ENCODE measurements at regions of chr10 and their contacts with region 1.

Region 1: GRCh38 chr10:77391605-77392235 is 245.9 kb downstream of the KCNMA1 start:
- DNase-seq: peak; percentile 53 to 74
- H3K4me3 ChIP-seq: no peak overlapping the region
- H3K27ac ChIP-seq: no peak overlapping the region
- H3K4me1 ChIP-seq: peaks cover 40% of the 10 kb centered on the region
- H3K27me3 ChIP-seq: no peaks in the 10 kb centered on the region
- CTCF ChIP-seq: peak; percentile 87

Region 2: DNA sequence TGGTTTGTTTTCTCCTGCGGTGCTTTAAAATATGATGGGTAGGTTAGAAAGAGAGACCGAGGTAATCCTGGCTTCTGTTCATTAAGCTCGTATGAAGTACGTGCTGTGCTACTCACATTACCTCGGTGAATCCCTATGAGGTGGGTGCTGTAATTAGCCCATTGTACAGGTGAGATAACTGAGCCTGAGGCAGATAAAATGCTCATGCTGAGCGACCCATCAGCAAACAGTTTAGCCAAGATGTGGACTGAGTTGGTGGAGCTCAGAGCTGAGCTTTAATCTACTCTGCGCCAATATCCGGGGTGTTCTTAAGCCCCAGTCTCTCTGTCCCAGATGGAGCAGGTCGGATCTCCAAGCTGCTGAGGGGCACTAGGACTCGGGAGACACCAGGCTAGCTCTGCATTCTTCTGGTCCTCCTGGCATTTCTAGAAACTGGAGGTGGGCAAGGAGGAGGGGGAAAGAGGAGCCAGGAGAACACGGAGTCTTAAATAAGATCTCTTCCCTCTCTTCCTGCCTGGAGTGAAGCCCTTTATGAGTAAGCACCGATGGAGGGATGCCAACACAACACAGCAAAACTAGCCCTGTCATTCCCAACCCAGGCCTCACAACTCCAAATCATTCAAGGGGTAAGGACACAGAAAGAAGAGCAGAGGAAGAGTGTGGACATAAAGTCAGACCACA is 212.6 kb before region 1 on chr10:
- CTCF ChIA-PET with region 1: no interaction called
- POLR2A ChIA-PET with region 1: no interaction called
- intact Hi-C with region 1: loop called (anchors 1 kb)
- DNase-seq: peak; percentile 45 to 49
- H3K4me3 ChIP-seq: no peak overlapping the region
- H3K27ac ChIP-seq: no peak overlapping the region
- H3K4me1 ChIP-seq: peaks cover 14% of the 10 kb centered on the region
- H3K27me3 ChIP-seq: no peaks in the 10 kb centered on the region
- CTCF ChIP-seq: no peak

Region 3: DNA sequence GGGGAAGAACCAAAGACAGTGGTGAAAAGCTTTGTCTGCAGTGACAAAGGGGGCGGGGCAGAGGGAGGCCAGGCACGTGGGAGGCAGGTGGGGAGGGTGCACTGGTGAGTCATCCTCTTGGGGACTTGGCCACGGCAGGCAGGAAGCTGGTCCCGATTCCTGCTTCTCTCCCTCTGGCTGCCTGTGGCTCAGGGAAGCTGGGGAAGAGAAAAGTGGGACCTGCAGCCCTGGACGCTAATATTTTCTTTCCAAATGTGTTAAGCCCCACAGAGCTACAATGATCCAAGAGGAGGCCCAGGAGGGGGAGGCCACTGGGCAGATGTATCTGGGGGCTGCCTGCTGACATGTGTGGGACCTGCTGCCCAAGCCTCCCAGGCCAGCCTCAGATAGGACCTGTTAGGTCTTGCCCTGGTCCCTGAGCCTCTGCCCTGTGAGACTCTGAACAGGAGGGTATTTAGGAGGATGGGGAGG is 14.1 kb after region 1 on chr10:
- CTCF ChIA-PET with region 1: interaction called, 10 read pairs
- POLR2A ChIA-PET with region 1: no interaction called
- intact Hi-C with region 1: no loop called
- DNase-seq: peak; percentile 72 to 85
- H3K4me3 ChIP-seq: no peak overlapping the region
- H3K27ac ChIP-seq: no peak overlapping the region
- H3K4me1 ChIP-seq: peaks cover 35% of the 10 kb centered on the region
- H3K27me3 ChIP-seq: no peaks in the 10 kb centered on the region
- CTCF ChIP-seq: no peak

Region 4: DNA sequence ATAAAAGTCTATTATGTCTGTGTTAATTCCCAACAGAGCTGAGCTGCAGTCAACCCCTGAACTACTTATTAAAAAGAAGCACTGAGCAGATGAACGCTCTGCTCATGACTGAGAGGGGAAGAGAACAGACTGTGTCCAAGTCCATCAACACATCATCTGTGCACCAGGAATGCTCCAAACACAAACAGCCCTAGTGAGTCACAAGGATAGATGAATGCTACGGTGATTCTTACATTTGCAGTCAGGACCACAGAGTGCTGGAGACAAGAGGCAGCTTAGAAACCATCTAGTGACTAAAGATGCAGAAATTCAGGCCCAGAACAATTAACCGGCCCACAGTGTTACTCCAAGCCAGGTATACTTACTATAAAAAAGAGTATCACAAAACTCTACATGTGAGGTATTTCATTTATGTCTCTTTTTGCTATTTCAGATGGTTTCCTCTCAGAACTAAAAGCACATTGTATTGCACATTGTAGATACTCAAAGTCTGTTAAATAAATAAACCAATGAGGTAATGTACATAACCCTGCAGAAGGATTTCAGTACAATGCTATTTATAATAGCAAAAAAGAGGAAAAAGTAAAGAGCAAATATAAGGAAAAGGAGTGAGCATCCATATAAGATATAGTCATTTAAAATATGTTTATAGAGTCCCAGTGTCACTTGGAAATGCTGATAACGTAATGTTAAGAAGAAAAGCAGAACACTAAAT is 86.7 kb after region 1 on chr10:
- CTCF ChIA-PET with region 1: no interaction called
- POLR2A ChIA-PET with region 1: no interaction called
- intact Hi-C with region 1: loop called (anchors 5 kb)
- DNase-seq: no peak
- H3K4me3 ChIP-seq: no peak overlapping the region
- H3K27ac ChIP-seq: no peak overlapping the region
- H3K4me1 ChIP-seq: peaks cover 20% of the 10 kb centered on the region
- H3K27me3 ChIP-seq: no peaks in the 10 kb centered on the region
- CTCF ChIP-seq: no peak

Region 5: DNA sequence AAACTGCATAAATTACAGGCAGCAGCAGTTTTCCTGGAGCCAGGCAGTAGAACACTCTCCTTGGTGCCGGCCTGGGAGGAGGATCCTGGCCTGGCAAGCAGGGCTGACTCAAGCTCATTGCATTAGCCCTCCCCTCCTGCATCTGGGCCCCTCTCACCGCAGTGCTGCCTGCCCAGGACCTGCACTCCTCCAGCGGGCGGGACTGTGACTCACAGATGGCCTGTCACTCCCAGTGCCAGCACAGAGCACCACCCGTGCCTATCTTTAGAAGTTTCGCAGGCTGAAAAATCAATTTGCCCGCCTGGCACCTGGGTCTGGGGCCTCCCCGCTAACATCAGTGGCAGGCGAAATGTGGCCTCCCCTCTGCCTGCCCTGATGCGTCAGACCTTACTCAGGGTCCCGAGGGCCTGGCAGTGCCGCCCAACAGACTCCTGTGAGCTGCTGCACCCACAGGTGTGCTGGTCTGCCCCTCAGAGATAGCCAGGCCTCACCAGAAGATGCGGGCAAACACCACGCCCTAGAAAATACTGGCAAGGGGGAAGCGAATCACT is 122.1 kb after region 1 on chr10:
- CTCF ChIA-PET with region 1: interaction called, 10 read pairs
- POLR2A ChIA-PET with region 1: interaction called, 6 read pairs
- intact Hi-C with region 1: loop called (anchors 2 kb)
- DNase-seq: peak; percentile 92 to 93
- H3K4me3 ChIP-seq: peak overlapping the region; percentile 24; the same call in 1 of the 2 replicates
- H3K27ac ChIP-seq: peak overlapping the region; percentile 73
- H3K4me1 ChIP-seq: peaks cover 47% of the 10 kb centered on the region
- H3K27me3 ChIP-seq: no peaks in the 10 kb centered on the region
- CTCF ChIP-seq: no peak